B cell (primary cell): ENCODE measurements at regions of chr17 and their contacts with region 1.

Region 1: GRCh38 chr17:28644985-28645939 is at the start of gene BLTP2:
- DNase-seq: peak; percentile 97
- ATAC-seq: peak; percentile 97
- H3K4me3 ChIP-seq: peak within 1 kb of the TSS; percentile 79 to 93 (median 81)
- H3K4me3 Mint-ChIP-seq: peak within 1 kb of the TSS; percentile 97
- H3K27ac ChIP-seq: peak within 1 kb of the TSS; percentile 90 to 94
- H3K27ac Mint-ChIP-seq: peak within 1 kb of the TSS; percentile 89
- H3K4me1 ChIP-seq: peaks cover 32 to 37% of the 10 kb centered on the region in 2 donors
- H3K4me1 Mint-ChIP-seq: peaks cover 36% of the 10 kb centered on the region
- H3K27me3 ChIP-seq: no peaks in the 10 kb centered on the region
- H3K27me3 Mint-ChIP-seq: no peaks in the 10 kb centered on the region
- CTCF ChIP-seq: no peak
- total RNA-seq, gene BLTP2: 156 and 177 TPM in 2 replicates

Region 2: DNA sequence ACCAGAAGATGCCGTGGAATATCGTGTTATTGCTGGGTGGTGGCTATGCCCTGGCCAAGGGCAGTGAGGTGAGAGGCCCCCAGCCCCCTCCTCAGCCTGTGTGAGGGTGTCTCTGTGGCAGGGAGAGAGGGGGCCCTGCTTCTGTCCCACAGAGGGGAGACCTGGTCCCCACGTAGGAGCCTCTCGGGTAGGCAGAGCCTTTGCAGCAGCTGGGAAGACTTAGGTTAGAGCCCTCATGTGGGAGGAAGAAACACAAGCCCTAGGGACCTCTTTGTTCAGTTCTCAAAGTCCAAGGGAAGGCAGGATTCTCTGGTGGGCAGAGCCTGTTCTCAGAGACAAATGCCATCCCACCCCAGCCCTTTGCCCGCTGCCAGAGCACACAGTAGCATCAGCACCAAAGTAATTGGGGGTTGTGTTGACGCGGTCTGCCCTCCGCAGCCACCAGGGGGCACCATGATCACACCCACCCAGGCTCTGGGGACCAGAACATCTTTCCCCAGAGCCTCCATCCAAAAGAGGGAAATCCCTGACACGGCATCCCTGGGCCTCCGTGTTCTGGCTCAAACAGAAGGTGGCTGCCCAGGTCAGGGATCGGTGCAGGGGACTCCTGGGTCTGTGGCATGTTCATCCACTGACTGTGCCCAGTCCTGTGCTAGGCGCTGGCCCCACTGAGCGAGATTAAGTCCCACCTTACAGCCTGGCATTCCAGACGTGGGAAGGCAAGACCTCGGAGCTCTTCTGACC is 150.6 kb before region 1 on chr17:
- CTCF ChIA-PET with region 1: interaction called, 10 read pairs
- POLR2A ChIA-PET with region 1: no interaction called
- intact Hi-C with region 1: no loop called
- DNase-seq: peak; percentile 86
- ATAC-seq: peak; percentile 85
- H3K4me3 ChIP-seq: no peak overlapping the region
- H3K4me3 Mint-ChIP-seq: no peak overlapping the region
- H3K27ac ChIP-seq: no peak overlapping the region
- H3K27ac Mint-ChIP-seq: no peak overlapping the region
- H3K4me1 ChIP-seq: peaks cover 0 to 11% of the 10 kb centered on the region in 2 donors
- H3K4me1 Mint-ChIP-seq: peaks cover 11% of the 10 kb centered on the region
- H3K27me3 ChIP-seq: no peaks in the 10 kb centered on the region
- H3K27me3 Mint-ChIP-seq: no peaks in the 10 kb centered on the region
- CTCF ChIP-seq: peak; percentile 85

Region 3: GRCh38 chr17:28661635-28662537 is 16.6 kb after region 1 on chr17 and contains the starts of genes SDF2 and SUPT6H:
- CTCF ChIA-PET with region 1: interaction called, 59 read pairs
- POLR2A ChIA-PET with region 1: interaction called, 42 read pairs
- intact Hi-C with region 1: loop called (anchors 1 kb)
- DNase-seq: peak; percentile 97
- ATAC-seq: peak; percentile 84
- H3K4me3 ChIP-seq: peak within 1 kb of the TSS; percentile 85 to 100 (median 99)
- H3K4me3 Mint-ChIP-seq: peak within 1 kb of the TSS; percentile 99
- H3K27ac ChIP-seq: peak within 1 kb of the TSS; percentile 90 to 99
- H3K27ac Mint-ChIP-seq: peak within 1 kb of the TSS; percentile 100
- H3K4me1 ChIP-seq: peaks cover 22 to 29% of the 10 kb centered on the region in 2 donors
- H3K4me1 Mint-ChIP-seq: peaks cover 57% of the 10 kb centered on the region
- H3K27me3 ChIP-seq: no peaks in the 10 kb centered on the region
- H3K27me3 Mint-ChIP-seq: no peaks in the 10 kb centered on the region
- CTCF ChIP-seq: no peak
- total RNA-seq, gene SDF2: 38.1 and 40.4 TPM in 2 replicates
- total RNA-seq, gene SUPT6H: 110 and 119 TPM in 2 replicates

Region 4: DNA sequence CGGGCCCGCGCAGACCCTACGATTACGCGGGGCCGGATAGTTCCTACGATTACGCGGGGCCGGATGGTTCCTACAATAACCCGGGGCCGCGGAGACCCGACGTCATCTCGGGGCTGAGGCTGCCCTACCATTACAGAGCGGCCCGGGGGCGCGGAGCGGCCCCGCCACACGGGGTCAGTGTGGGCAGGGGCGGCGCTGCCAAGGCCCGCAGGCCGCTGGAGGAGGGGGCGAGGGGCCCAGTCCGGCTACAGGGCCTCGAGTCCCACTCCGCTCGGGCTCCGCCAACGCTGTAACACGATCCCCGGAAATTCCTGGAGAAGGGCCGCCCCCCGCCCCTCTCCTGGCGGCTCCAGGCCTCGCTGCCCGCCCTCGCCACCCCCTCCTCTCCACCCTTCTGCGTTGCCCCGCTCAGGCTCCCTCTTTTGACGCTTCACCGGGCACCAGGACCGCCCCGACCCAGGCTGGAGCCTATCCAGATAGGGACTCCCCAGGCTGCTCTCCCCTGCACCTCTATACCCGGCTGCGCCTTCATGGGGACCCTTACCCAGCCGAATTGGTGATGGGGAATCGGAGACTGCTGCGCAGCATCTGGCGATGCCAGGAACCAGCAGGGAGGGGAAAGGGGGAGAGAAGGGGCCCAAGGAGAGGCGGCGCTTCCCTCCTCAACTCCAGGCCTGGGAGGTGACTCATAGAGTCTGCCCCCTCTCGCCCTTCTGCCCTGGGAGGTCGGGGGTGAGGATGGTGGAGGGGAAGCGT is 72.5 kb after region 1 on chr17 and contains the start of gene RAB34:
- CTCF ChIA-PET with region 1: interaction called, 5 read pairs
- POLR2A ChIA-PET with region 1: interaction called, 9 read pairs
- intact Hi-C with region 1: loop called (anchors 2 kb)
- DNase-seq: peak; percentile 70
- ATAC-seq: peak; percentile 18
- H3K4me3 ChIP-seq: peak within 1 kb of the TSS in 4 of 5 experiments; percentile 46 to 61 (median 52)
- H3K4me3 Mint-ChIP-seq: peak within 1 kb of the TSS; percentile 86
- H3K27ac ChIP-seq: peak within 1 kb of the TSS; percentile 56 to 71
- H3K27ac Mint-ChIP-seq: peak within 1 kb of the TSS; percentile 89
- H3K4me1 ChIP-seq: peaks cover 44 to 57% of the 10 kb centered on the region in 2 donors
- H3K4me1 Mint-ChIP-seq: peaks cover 45% of the 10 kb centered on the region
- H3K27me3 ChIP-seq: peaks cover 0 to 8% (median 2%) of the 10 kb centered on the region in 4 experiments
- H3K27me3 Mint-ChIP-seq: no peaks in the 10 kb centered on the region
- CTCF ChIP-seq: no peak
- total RNA-seq, gene RAB34: 18.0 and 20.5 TPM in 2 replicates

Region 5: DNA sequence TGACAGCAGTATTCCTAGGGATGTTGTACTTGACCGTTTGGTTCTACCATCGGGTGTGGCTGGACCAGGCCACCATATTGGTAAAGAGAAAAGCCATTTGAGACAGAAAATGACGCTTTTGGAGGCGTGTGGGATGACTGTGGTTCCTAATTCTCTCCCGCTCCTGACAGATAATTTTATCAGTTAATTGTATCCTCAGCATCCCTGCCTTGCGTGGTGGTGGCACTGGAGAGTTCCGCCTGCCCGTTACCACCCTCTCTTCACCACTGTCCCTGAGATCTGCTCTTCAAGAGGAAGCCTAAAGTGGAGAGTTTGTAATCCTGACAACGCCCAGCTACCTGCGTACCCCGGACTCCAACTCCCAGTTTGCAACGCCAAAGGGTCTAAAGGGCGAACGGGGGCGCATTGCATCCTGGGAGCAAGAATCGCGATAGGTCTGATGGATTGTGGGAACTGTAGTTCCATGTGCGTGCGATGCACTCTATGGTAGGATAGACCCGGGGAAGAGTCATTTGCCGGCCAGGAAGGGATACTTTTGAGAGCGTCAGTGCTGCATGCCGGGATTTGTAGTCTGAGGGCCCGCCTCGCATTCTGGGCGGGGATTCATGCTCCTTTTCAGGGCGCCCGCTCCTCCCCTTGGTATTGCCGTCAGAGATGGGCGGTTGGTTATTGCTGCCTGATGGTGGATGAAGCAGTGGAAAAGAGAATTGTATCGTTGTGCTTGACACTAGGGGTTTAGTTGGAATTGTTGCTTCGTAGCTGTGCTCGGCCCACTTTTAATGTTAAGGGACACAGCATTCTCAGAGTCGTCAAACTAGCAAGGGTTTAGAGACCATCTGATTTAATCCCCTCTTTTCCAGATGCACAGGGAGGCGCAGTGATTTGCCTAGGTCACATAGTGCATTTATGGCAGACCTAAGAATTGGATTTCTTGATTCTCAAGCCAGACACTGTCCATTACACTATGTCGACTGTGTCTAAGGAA is 307.0 kb after region 1 on chr17:
- CTCF ChIA-PET with region 1: interaction called, 7 read pairs
- POLR2A ChIA-PET with region 1: interaction called, 4 read pairs
- intact Hi-C with region 1: loop called (anchors 2 kb)
- DNase-seq: peak; percentile 99
- ATAC-seq: peak; percentile 68
- H3K4me3 ChIP-seq: peak overlapping the region; percentile 68 to 99 (median 86)
- H3K4me3 Mint-ChIP-seq: no peak overlapping the region
- H3K27ac ChIP-seq: peak overlapping the region; percentile 97 to 98
- H3K27ac Mint-ChIP-seq: no peak overlapping the region
- H3K4me1 ChIP-seq: peaks cover 24 to 28% of the 10 kb centered on the region in 2 donors
- H3K4me1 Mint-ChIP-seq: peaks cover 17% of the 10 kb centered on the region
- H3K27me3 ChIP-seq: no peaks in the 10 kb centered on the region
- H3K27me3 Mint-ChIP-seq: no peaks in the 10 kb centered on the region
- CTCF ChIP-seq: no peak

Region 6: GRCh38 chr17:29568331-29569244 is 923.3 kb after region 1 on chr17 and contains the start of gene TP53I13:
- CTCF ChIA-PET with region 1: no interaction called
- POLR2A ChIA-PET with region 1: no interaction called
- intact Hi-C with region 1: loop called (anchors 10 kb)
- DNase-seq: peak; percentile 92
- ATAC-seq: peak; percentile 60
- H3K4me3 ChIP-seq: peak within 1 kb of the TSS; percentile 71 to 99 (median 80)
- H3K4me3 Mint-ChIP-seq: peak within 1 kb of the TSS; percentile 99
- H3K27ac ChIP-seq: peak within 1 kb of the TSS; percentile 71 to 76
- H3K27ac Mint-ChIP-seq: peak within 1 kb of the TSS; percentile 97
- H3K4me1 ChIP-seq: peaks cover 27 to 40% of the 10 kb centered on the region in 2 donors
- H3K4me1 Mint-ChIP-seq: peaks cover 39% of the 10 kb centered on the region
- H3K27me3 ChIP-seq: no peaks in the 10 kb centered on the region
- H3K27me3 Mint-ChIP-seq: no peaks in the 10 kb centered on the region
- CTCF ChIP-seq: no peak
- total RNA-seq, gene TP53I13: 220 and 224 TPM in 2 replicates